AG04449 (cell line): ENCODE measurements at regions of chr16 and their contacts with region 1.

Region 1: GRCh38 chr16:65116818-65117430 is 4.9 kb downstream of the CDH11 start:
- DNase-seq: no peak
- H3K4me3 ChIP-seq: peak overlapping the region; percentile 54
- CTCF ChIP-seq: no peak

Region 2: DNA sequence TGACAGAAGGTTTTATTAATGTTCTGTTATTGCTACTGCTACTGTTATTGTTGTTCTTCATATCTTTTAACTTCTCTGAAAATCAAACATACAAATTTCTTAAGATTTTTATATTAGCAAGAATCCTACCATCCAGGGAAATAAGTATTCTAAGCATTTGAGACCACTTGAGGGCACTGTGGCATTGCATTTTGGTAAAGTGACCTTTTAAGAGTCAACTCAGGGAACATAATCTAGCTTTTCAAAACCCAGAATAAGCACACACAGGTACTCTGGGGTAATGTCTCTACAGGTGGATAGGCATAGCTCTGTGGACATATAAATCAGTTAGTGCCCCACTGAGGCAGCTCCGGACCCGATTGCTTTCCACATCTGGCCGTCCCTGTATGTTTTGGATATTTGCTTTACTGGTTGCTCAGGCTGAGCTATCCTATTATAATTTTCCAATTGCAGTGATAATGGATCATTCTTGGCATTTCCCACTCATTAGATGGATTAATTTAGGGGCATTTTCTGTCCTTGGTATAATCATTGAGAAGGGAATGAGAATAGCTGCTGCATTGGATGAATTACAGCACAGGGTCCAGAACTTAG is 1655.6 kb before region 1 on chr16:
- CTCF ChIA-PET with region 1: interaction called, 14 read pairs
- POLR2A ChIA-PET with region 1: no interaction called
- DNase-seq: peak; percentile 4
- H3K4me3 ChIP-seq: no peak overlapping the region
- CTCF ChIP-seq: peak; percentile 18

Region 3: GRCh38 chr16:64975821-64976220 is 141.1 kb before region 1 on chr16:
- CTCF ChIA-PET with region 1: no interaction called
- POLR2A ChIA-PET with region 1: no interaction called
- DNase-seq: no peak
- H3K4me3 ChIP-seq: no peak overlapping the region
- CTCF ChIP-seq: no peak

Region 4: GRCh38 chr16:65106757-65107156 is 10.2 kb before region 1 on chr16:
- CTCF ChIA-PET with region 1: interaction called, 11 read pairs
- POLR2A ChIA-PET with region 1: interaction called, 7 read pairs
- DNase-seq: no peak
- H3K4me3 ChIP-seq: no peak overlapping the region
- CTCF ChIP-seq: no peak

Region 5: GRCh38 chr16:65126845-65127624 is 10.1 kb after region 1 on chr16:
- CTCF ChIA-PET with region 1: no interaction called
- POLR2A ChIA-PET with region 1: no interaction called
- DNase-seq: no peak
- H3K4me3 ChIP-seq: no peak overlapping the region
- CTCF ChIP-seq: no peak